ENCODE measurements at regions of chr17 and their contacts with region 1.

Region 1: GRCh38 chr17:78865682-78866390 is 25.2 kb upstream of the USP36 start:
- DNase-seq: peak; percentile 66
- ATAC-seq: peak; percentile 81
- H3K4me3 Mint-ChIP-seq: no peak overlapping the region
- H3K27ac Mint-ChIP-seq: no peak overlapping the region
- H3K4me1 Mint-ChIP-seq: peaks cover 3% of the 10 kb centered on the region
- H3K27me3 Mint-ChIP-seq: peaks cover 5% of the 10 kb centered on the region
- CTCF ChIP-seq: peak; percentile 34

Region 2: DNA sequence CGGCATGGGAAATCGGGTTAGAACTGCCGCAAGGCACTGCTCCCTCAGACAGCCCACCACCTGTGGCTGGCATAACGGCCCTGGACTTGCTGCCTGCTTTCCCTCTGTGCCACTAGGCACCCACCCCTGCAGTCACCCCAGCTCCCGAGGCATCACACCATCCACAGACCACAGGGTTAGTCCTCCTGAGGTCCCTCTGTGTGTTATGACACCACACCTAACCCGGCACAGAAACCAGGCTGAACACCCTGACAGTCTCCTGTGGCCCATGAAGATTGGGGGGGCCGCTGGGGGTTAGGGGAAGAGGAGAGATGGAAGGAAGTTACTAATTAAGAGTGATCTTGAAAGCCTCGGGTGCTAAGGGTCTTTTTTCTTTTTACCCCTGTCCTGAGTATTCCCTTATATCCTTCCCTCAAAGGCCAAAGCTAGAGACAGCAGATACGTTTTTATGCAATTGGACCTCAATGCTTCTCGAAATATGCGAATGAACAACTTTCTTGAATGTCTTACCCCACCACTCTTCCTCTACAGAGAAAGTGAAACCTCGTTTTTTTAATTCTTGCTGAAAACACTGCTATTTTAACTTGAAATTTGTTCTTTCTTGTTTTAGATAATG is 90.8 kb before region 1 on chr17:
- CTCF ChIA-PET with region 1: no interaction called
- POLR2A ChIA-PET with region 1: no interaction called
- intact Hi-C with region 1: no loop called
- DNase-seq: peak; percentile 57
- ATAC-seq: peak; percentile 56
- H3K4me3 Mint-ChIP-seq: peak overlapping the region; percentile 88
- H3K27ac Mint-ChIP-seq: peak overlapping the region; percentile 97
- H3K4me1 Mint-ChIP-seq: peaks cover 85% of the 10 kb centered on the region
- H3K27me3 Mint-ChIP-seq: no peaks in the 10 kb centered on the region
- CTCF ChIP-seq: no peak

Region 3: DNA sequence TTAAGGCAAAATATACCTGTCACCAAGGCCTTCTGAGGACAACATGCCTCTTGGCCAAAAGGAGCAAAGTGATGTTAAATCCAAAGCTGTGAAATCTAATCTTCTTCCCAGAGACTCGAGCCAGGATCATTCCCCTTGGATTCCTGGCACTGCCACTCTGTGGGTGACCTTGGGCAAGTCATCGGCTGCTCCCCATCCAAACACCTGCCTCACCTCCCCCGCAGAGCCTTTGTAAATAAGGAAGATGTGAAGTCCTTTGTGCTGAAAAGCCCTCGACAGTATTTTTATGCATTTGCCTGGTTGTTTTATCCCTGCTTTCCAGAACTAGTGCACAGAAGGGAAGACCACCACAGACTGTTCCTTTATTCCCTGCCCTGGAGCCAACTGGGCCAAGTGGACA is 42.6 kb after region 1 on chr17:
- CTCF ChIA-PET with region 1: no interaction called
- POLR2A ChIA-PET with region 1: no interaction called
- intact Hi-C with region 1: no loop called
- DNase-seq: no peak
- ATAC-seq: no peak
- H3K4me3 Mint-ChIP-seq: no peak overlapping the region
- H3K27ac Mint-ChIP-seq: no peak overlapping the region
- H3K4me1 Mint-ChIP-seq: peaks cover 6% of the 10 kb centered on the region
- H3K27me3 Mint-ChIP-seq: peaks cover 4% of the 10 kb centered on the region
- CTCF ChIP-seq: no peak

Region 4: DNA sequence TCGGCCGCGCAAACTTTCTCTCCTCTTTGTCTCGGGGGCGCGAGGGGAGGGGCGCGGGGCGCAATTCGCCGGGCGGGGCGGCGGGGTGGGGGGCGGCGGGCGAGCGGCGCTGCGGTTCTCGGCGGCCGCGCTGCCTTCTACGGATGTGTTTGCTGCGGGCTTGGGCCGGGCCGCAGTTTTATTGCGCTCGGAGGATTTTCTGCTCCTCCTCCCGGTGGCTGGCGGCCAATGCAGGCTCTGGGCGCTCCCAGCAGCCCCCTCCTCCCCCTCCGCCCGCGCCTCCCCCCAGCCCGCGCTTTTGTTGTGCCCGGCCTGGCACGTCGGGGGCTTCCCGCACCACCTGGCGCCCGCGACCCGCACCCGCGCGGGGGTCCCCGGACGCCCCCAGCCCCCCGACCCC is 59.4 kb after region 1 on chr17 and contains the start of gene TIMP2:
- CTCF ChIA-PET with region 1: interaction called, 9 read pairs
- POLR2A ChIA-PET with region 1: interaction called, 4 read pairs
- intact Hi-C with region 1: loop called (anchors 1 kb)
- DNase-seq: peak; percentile 62
- ATAC-seq: peak; percentile 81
- H3K4me3 Mint-ChIP-seq: peak within 1 kb of the TSS; percentile 86
- H3K27ac Mint-ChIP-seq: no peak within 1 kb of the TSS
- H3K4me1 Mint-ChIP-seq: peaks cover 15% of the 10 kb centered on the region
- H3K27me3 Mint-ChIP-seq: peaks cover 15% of the 10 kb centered on the region
- CTCF ChIP-seq: no peak
- total RNA-seq, gene TIMP2: 3.5 and 4.2 TPM in 2 replicates

Region 5: DNA sequence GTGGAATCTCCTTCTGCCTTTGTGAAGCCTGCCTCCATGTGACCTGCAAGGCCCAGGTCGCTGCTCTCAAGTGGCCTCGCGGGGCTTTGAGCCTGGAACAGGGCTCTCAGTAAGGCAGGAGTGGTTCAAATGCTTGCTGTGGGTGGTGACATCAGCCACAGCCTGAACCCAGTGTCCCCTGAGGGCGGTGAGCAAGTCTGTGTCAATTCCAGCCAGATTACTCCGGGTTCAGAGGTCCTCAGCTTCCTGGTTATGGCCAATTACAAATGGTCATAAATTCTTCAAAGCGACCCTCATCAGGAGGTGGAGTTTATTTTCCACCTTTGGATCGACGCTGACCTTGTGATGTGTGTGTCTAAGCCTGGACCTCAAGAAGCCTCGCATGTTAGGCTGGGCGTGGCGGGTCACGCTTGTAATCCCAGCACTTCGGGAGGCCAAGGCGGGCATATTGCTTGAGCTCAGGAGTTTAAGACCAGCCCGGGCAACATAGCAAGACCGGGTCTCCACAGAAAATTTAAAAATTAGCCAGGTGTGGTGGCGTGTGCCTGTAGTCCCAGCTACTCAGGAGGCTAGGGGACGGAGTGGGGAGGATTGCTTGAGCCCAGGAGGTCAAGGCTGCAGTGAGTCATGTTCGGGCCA is 96.6 kb after region 1 on chr17:
- CTCF ChIA-PET with region 1: interaction called, 11 read pairs
- POLR2A ChIA-PET with region 1: no interaction called
- intact Hi-C with region 1: no loop called
- DNase-seq: no peak
- ATAC-seq: no peak
- H3K4me3 Mint-ChIP-seq: no peak overlapping the region
- H3K27ac Mint-ChIP-seq: no peak overlapping the region
- H3K4me1 Mint-ChIP-seq: peaks cover 17% of the 10 kb centered on the region
- H3K27me3 Mint-ChIP-seq: peaks cover 3% of the 10 kb centered on the region
- CTCF ChIP-seq: no peak